K562 (cell line): ENCODE measurements at regions of chr16 and their contacts with region 1.

Region 1: DNA sequence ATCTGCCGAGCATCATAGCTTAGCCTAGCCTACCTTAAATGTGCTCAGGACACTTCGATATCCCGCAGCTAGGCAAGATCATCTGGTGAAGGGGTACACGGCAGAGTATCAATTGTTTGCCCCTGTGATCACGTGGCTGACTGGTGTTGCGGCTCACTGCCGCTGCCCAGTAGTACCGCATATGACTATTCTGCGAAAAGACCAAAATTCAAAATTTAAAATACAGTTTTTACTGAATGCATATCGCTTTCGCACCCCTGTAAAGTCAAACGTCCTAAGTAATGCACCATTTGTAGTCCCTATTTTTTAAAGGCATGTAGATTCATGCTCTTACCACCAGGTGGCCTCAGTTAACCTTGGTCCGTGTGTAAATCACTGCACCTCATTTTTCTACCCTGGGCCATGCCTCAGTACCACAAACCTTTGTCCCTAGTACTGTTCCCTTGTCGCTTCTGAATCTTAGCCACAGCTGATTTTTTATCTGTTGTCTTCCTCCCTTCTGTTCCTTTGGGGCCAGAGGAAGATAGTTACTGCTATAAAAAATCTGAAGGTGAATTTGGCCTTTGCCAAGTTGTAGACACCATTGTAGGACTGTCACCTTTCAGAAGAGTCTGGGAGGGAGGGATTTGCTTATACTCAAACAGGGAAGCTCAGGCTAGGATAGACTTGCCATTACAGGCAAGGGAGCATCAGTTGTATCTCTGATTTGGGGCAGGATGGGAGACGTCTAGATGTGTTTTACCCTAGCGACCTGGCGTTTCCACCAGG is 34.4 kb downstream of the WWP2 start:
- DNase-seq: peak; percentile 61 to 69 (median 65)
- ATAC-seq: peak; percentile 86
- H3K4me3 ChIP-seq: no peak overlapping the region
- H3K27ac ChIP-seq: no peak overlapping the region
- H3K4me1 ChIP-seq: no peaks in the 10 kb centered on the region; a peak in 1 of 5 replicates
- H3K27me3 ChIP-seq: no peaks in the 10 kb centered on the region
- CTCF ChIP-seq: peak; percentile 79 to 91 (median 86)
- EP300 ChIP-seq: no peak
- POLR2A ChIP-seq: no peak
- RAD21 ChIP-seq: peak; percentile 70 to 94

Region 2: DNA sequence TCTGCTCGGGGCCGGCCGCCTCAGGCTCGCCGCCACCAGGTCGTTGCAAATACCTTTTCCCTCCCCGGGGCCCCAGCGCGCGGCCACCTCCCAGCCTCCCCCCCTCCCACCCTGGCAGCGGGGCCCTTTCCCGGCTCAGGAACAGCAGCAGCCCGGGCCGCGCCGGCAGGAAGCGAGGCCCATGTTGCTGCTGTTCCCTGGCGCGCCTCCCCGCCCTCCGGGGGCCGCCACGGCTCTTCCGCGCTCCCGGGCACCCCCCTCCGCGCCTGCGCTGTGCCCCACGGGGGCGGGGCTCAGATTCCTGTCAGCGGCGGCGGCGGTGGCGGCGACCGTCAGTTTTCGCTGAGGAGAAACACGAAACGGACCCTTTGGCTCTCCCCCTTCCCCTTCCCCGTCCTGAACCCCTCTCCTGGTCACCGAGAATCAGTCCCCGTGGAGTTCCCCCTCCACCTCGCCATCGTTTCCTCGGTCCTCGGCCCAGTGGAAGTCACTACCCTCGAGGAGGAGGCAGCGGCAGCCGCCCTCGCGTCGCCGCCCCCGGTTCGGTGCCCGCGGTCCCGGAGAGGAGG is 230.8 kb before region 1 on chr16 and contains the start of gene NFAT5:
- CTCF ChIA-PET with region 1: no interaction called
- POLR2A ChIA-PET with region 1: no interaction called
- in situ Hi-C with region 1: no loop called
- intact Hi-C with region 1: no loop called
- DNase-seq: peak; percentile 92 to 94 (median 92)
- ATAC-seq: peak; percentile 79
- H3K4me3 ChIP-seq: peak within 1 kb of the TSS; percentile 98
- H3K27ac ChIP-seq: peak within 1 kb of the TSS; percentile 97
- H3K4me1 ChIP-seq: peaks cover 9 to 20% of the 10 kb centered on the region in 2 experiments
- H3K27me3 ChIP-seq: no peaks in the 10 kb centered on the region
- CTCF ChIP-seq: peak in 1 of 3 experiments; percentile 18; a peak in 3 of 6 replicates
- EP300 ChIP-seq: peak; percentile 100
- POLR2A ChIP-seq: peak; percentile 91
- RAD21 ChIP-seq: peak; percentile 14 to 24; a peak in 1 of 4 replicates
- polyA plus RNA-seq, gene NFAT5: 0.78 to 1.6 TPM

Region 3: GRCh38 chr16:69859105-69859989 is 62.8 kb after region 1 on chr16:
- CTCF ChIA-PET with region 1: no interaction called
- POLR2A ChIA-PET with region 1: no interaction called
- in situ Hi-C with region 1: no loop called
- intact Hi-C with region 1: loop called (anchors 5 kb)
- DNase-seq: peak; percentile 65 to 71 (median 68)
- ATAC-seq: peak; percentile 94
- H3K4me3 ChIP-seq: no peak overlapping the region
- H3K27ac ChIP-seq: no peak overlapping the region
- H3K4me1 ChIP-seq: no peaks in the 10 kb centered on the region; a peak in 1 of 5 replicates
- H3K27me3 ChIP-seq: no peaks in the 10 kb centered on the region
- CTCF ChIP-seq: peak; percentile 32 to 58 (median 53); a peak in 5 of 6 replicates
- EP300 ChIP-seq: no peak
- POLR2A ChIP-seq: no peak
- RAD21 ChIP-seq: peak in 1 of 2 experiments; percentile 32; a peak in 1 of 4 replicates

Region 4: GRCh38 chr16:69930117-69930776 is 133.7 kb after region 1 on chr16:
- CTCF ChIA-PET with region 1: interaction called, 21 read pairs
- POLR2A ChIA-PET with region 1: interaction called, 3 read pairs
- in situ Hi-C with region 1: no loop called
- intact Hi-C with region 1: loop called (anchors 1 kb)
- DNase-seq: peak; percentile 78 to 89 (median 84)
- ATAC-seq: peak; percentile 99
- H3K4me3 ChIP-seq: no peak overlapping the region
- H3K27ac ChIP-seq: no peak overlapping the region
- H3K4me1 ChIP-seq: 0 out of 5 replicates have a peak, but pooled peaks cover 0 to 3% of the 10 kb centered on the region in 2 experiments
- H3K27me3 ChIP-seq: no peaks in the 10 kb centered on the region
- CTCF ChIP-seq: peak; percentile 71 to 82 (median 75)
- EP300 ChIP-seq: no peak
- POLR2A ChIP-seq: no peak
- RAD21 ChIP-seq: peak; percentile 65 to 82